Adrenal gland (tissue), 19 donors: ENCODE measurements at regions of chr17 and their contacts with region 1.

Region 1: GRCh38 chr17:4997302-4998026 is at the starts of genes INCA1 and KIF1C:
- DNase-seq: peak; percentile 90 to 95 (median 93)
- H3K4me3 ChIP-seq: peak within 1 kb of the TSS; percentile 27 to 81 (median 70)
- H3K27ac ChIP-seq: peak within 1 kb of the TSS in 4 of 5 donors; percentile 67 to 90 (median 85)
- H3K4me1 ChIP-seq: peaks cover 24 to 26% of the 10 kb centered on the region in 2 donors
- H3K27me3 ChIP-seq: no peaks in the 10 kb centered on the region
- CTCF ChIP-seq: peak in 4 of 6 experiments; percentile 33 to 47 (median 40)
- POLR2A ChIP-seq: peak; percentile 37 to 82
- total RNA-seq, gene INCA1: 0.44 to 2.5 (median 0.98) TPM in 7 of 9 donors, not detected in the others
- total RNA-seq, gene KIF1C: 20.9 to 91.0 (median 61.9) TPM

Region 2: GRCh38 chr17:4939796-4940624 is 57.5 kb before region 1 on chr17 and contains the starts of genes RNF167 and SLC25A11:
- intact Hi-C with region 1: loop called in 1 of 2 experiments (anchors 5 kb)
- DNase-seq: peak; percentile 94 to 99 (median 98)
- H3K4me3 ChIP-seq: peak within 1 kb of the TSS; percentile 50 to 95 (median 80)
- H3K27ac ChIP-seq: peak within 1 kb of the TSS; percentile 79 to 93 (median 90)
- H3K4me1 ChIP-seq: peaks cover 21 to 34% of the 10 kb centered on the region in 2 donors
- H3K27me3 ChIP-seq: no peaks in the 10 kb centered on the region
- CTCF ChIP-seq: no peak
- POLR2A ChIP-seq: peak in 1 of 2 donors; percentile 56
- total RNA-seq, gene RNF167: 46.7 to 130 (median 88.8) TPM
- total RNA-seq, gene SLC25A11: 60.2 to 77.7 (median 68.0) TPM